ENCODE measurements at regions of chr11 and their contacts with region 1.

Region 1: GRCh38 chr11:33742249-33742851 is 6.1 kb upstream of the CD59 start:
- DNase-seq: no peak
- H3K4me3 ChIP-seq: no peak overlapping the region
- H3K27ac ChIP-seq: no peak overlapping the region
- H3K27me3 ChIP-seq: no peaks in the 10 kb centered on the region
- CTCF ChIP-seq: peak; percentile 50

Region 2: DNA sequence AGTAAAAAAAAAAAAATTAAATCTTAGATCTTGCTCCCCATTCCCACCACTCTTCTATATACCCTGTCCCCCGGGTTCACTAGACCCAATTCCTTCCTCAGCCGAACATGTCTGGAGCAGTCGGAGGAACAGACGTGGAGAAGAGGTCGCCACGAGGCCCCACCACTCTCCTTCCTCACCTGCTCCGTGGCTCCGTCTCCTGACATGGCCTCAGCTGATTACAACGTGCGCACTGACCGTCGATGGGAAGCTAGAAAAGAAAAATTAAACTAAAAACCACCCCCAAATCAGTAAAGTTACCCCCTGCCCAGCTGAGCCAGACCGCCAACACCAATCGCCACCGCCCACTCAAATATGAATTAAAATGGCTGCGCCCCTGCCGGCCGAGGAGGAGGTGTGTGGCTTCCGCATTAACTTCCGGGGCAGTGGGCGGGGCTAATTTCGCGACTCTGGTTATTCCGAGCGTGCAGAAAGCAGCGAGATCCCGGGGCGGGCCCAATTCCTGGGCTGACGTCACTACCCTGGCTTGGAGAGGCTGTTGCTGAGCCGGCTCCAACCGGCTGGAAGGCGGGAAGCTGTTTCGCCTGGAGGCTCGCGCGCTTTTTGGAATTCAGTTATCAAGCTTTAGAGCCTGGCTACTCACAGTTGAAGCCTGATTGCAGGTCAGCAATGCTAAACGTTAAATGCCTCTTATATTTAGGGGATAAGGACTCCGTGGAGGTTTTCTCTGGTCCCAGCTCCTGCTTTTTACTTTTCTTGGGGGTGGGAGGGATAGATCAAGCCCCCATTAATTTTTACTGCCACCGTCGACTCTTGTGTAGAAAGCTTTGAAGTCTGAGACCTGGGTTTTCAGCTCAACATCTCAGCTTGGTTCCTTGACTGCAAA is 581.0 kb before region 1 on chr11 and contains the start of gene CSTF3:
- CTCF ChIA-PET with region 1: interaction called, 10 read pairs
- POLR2A ChIA-PET with region 1: no interaction called
- DNase-seq: peak; percentile 96
- H3K4me3 ChIP-seq: peak within 1 kb of the TSS; percentile 90
- H3K27ac ChIP-seq: peak within 1 kb of the TSS; percentile 81
- H3K27me3 ChIP-seq: no peaks in the 10 kb centered on the region
- CTCF ChIP-seq: peak; percentile 54
- polyA plus RNA-seq, gene CSTF3: 29.9 and 38.6 TPM in 2 replicates

Region 3: DNA sequence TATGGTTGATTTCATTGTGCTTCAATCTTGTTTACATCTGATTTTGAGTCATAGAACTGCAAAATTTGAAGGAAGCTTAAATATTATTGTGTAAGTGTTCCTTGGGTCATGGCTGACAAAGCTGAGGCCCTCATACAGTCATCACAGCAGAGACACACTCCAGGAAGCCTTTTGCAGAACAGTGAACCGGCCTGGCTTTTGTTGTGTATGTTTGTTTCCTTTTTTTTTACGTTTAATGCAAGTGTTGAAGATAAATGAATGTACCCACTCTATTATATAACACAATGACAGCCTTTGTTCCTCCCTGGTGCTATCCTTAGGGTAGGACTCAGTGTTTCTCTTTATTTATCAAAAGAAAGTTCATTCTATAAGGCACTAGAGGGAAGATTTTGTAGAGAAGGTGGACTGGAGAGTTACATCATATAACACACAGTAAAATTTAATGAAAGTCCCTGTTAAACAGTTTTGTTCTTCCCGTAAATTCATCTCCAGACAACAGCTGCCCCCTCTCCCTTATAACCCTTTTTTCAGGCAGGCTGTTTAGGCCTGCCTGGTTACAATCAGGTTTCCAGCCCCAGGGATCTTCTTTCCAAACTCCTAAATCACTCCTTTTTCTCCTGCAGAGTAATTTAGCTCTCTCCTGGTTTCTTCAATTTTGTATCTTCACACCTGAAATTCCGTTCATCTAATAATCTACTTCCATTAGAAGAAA is 546.7 kb before region 1 on chr11:
- CTCF ChIA-PET with region 1: no interaction called
- POLR2A ChIA-PET with region 1: no interaction called
- DNase-seq: no peak
- H3K4me3 ChIP-seq: no peak overlapping the region
- H3K27ac ChIP-seq: no peak overlapping the region
- H3K27me3 ChIP-seq: no peaks in the 10 kb centered on the region
- CTCF ChIP-seq: no peak

Region 4: GRCh38 chr11:33542921-33543320 is 199.4 kb before region 1 on chr11:
- CTCF ChIA-PET with region 1: interaction called, 14 read pairs
- POLR2A ChIA-PET with region 1: no interaction called
- DNase-seq: no peak
- H3K4me3 ChIP-seq: no peak overlapping the region
- H3K27ac ChIP-seq: no peak overlapping the region
- H3K27me3 ChIP-seq: no peaks in the 10 kb centered on the region
- CTCF ChIP-seq: peak; percentile 72

Region 5: GRCh38 chr11:33700425-33701271 is 41.7 kb before region 1 on chr11 and contains the start of gene C11orf91:
- CTCF ChIA-PET with region 1: interaction called, 22 read pairs
- POLR2A ChIA-PET with region 1: interaction called, 5 read pairs
- DNase-seq: peak; percentile 87
- H3K4me3 ChIP-seq: peak within 1 kb of the TSS; percentile 66
- H3K27ac ChIP-seq: peak within 1 kb of the TSS; percentile 82
- H3K27me3 ChIP-seq: no peaks in the 10 kb centered on the region
- CTCF ChIP-seq: no peak
- polyA plus RNA-seq, gene C11orf91: not detected in 2 replicates

Region 6: GRCh38 chr11:33716236-33716635 is 26.1 kb before region 1 on chr11:
- CTCF ChIA-PET with region 1: interaction called, 42 read pairs
- POLR2A ChIA-PET with region 1: no interaction called
- DNase-seq: no peak
- H3K4me3 ChIP-seq: no peak overlapping the region
- H3K27ac ChIP-seq: no peak overlapping the region
- H3K27me3 ChIP-seq: no peaks in the 10 kb centered on the region
- CTCF ChIP-seq: peak; percentile 28; the same call in 1 of the 2 replicates

Region 7: DNA sequence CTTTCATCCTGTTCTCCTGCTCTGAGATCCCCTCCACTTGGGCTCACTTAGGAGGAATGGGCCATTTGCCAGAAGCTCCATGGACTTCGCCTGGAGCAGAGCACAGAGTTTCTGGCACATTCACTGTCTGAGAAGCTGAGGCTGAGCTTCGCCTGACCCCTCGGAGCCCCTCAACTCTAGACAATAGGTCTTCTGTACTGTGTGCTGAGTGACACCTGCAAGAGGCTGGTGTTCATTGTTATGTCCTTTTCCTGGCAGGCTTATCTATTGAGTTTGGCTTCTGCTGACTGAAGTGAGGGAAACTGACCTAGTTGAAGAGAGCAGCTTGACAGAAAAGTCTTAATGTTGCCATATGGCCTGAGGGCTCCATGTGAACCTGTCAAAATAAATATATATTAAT is 1002.8 kb after region 1 on chr11:
- CTCF ChIA-PET with region 1: no interaction called
- POLR2A ChIA-PET with region 1: no interaction called
- DNase-seq: no peak
- H3K4me3 ChIP-seq: no peak overlapping the region
- H3K27ac ChIP-seq: no peak overlapping the region
- H3K27me3 ChIP-seq: peaks cover 5% of the 10 kb centered on the region
- CTCF ChIP-seq: no peak

Measured in AG04450 (cell line).